Mammary epithelial cell (primary cell): ENCODE measurements at regions of chr5 and their contacts with region 1.

Region 1: DNA sequence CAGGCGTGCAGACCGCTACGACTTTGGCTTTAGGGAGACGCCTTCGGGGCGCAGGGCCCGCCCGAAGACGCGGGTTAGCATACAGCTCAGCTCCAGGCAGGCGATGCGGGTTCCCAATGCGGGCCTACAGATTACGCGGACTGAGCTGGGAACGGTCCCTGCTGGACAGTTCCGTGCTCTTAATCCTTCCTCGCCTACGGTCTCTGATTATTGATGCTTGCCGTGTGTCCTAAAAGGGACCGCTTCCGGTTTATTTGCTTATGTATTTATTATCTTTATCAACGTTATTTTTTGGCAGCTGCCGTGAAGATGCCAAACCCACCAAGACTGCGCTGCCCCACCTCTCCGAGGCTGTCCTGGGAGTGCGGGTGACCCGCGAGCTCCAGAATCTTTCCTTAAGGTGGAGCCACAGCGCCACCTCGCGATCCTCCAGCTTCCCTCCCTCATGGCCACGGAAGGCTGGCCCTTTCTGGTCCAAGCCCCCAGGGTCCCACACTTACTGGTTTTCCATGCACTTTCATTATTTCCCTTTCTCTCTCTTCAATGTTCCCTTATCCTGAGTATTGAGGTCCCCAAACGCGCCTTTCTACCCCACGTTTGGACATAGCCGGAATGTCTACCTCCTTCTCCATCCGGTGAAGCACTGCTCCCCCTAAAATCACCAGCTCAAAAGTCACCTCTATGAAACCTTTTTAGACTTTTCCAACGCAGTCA is 7.0 kb upstream of the EBF1 start:
- DNase-seq: peak; percentile 38
- H3K4me3 ChIP-seq: peak overlapping the region in 2 of 3 experiments; percentile 14 to 28
- H3K27ac ChIP-seq: no peak overlapping the region
- H3K4me1 ChIP-seq: peaks cover 4% of the 10 kb centered on the region
- H3K27me3 ChIP-seq: peaks cover 30% of the 10 kb centered on the region
- CTCF ChIP-seq: peak; percentile 88 to 90

Region 2: GRCh38 chr5:158695595-158696330 is 411.0 kb before region 1 on chr5:
- CTCF ChIA-PET with region 1: interaction called, 4 read pairs
- dilution Hi-C with region 1: no loop called
- in situ Hi-C with region 1: loop called (anchors 5 kb)
- intact Hi-C with region 1: loop called (anchors 1 kb)
- DNase-seq: peak; percentile 17
- H3K4me3 ChIP-seq: no peak overlapping the region
- H3K27ac ChIP-seq: no peak overlapping the region
- H3K4me1 ChIP-seq: no peaks in the 10 kb centered on the region
- H3K27me3 ChIP-seq: peaks cover 2% of the 10 kb centered on the region
- CTCF ChIP-seq: peak; percentile 90 to 97

Region 3: DNA sequence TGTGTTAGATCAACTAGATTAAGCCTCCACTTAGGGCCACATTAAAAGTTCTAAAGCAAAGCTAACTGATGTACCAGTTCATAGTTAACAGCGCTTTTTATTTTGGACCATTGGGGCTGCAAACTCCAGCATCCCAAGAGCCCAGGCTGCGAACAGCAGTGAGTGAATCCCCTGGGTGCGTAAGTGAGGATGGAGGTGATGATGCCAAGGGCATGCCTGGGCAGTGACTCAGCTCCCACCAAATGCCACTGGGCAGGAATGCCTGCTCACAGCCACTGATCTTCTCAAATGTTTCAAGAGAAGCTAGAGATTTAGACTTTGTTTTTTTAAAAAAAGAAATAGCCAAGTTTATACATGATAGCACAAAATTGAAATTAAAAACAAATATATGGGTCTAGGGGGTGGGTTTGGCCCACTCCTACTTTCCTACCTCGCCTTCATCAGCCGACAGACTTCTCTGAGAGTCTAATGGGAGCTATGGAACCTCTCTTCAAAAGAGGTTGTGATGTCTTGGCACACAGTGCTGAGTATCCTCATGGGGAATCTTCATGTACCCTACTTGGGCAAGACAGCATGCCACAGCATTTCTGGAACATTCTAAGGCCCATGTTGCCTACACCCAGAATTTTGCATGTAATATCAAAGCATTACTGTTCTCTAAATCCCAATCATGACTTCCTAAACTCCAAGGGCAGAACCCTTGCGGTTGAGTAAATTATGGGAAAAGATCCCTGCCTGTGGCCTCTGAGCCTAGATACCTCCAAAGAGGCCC is 405.1 kb before region 1 on chr5:
- CTCF ChIA-PET with region 1: interaction called, 10 read pairs
- dilution Hi-C with region 1: no loop called
- in situ Hi-C with region 1: loop called (anchors 5 kb)
- intact Hi-C with region 1: no loop called
- DNase-seq: peak; percentile 59
- H3K4me3 ChIP-seq: no peak overlapping the region
- H3K27ac ChIP-seq: no peak overlapping the region
- H3K4me1 ChIP-seq: peaks cover 15% of the 10 kb centered on the region
- H3K27me3 ChIP-seq: no peaks in the 10 kb centered on the region
- CTCF ChIP-seq: no peak

Region 4: GRCh38 chr5:158880483-158881001 is 226.2 kb before region 1 on chr5:
- CTCF ChIA-PET with region 1: no interaction called
- dilution Hi-C with region 1: no loop called
- in situ Hi-C with region 1: no loop called
- intact Hi-C with region 1: loop called (anchors 10 kb)
- DNase-seq: no peak
- H3K4me3 ChIP-seq: no peak overlapping the region
- H3K27ac ChIP-seq: no peak overlapping the region
- H3K4me1 ChIP-seq: no peaks in the 10 kb centered on the region
- H3K27me3 ChIP-seq: peaks cover 4% of the 10 kb centered on the region
- CTCF ChIP-seq: no peak

Region 5: DNA sequence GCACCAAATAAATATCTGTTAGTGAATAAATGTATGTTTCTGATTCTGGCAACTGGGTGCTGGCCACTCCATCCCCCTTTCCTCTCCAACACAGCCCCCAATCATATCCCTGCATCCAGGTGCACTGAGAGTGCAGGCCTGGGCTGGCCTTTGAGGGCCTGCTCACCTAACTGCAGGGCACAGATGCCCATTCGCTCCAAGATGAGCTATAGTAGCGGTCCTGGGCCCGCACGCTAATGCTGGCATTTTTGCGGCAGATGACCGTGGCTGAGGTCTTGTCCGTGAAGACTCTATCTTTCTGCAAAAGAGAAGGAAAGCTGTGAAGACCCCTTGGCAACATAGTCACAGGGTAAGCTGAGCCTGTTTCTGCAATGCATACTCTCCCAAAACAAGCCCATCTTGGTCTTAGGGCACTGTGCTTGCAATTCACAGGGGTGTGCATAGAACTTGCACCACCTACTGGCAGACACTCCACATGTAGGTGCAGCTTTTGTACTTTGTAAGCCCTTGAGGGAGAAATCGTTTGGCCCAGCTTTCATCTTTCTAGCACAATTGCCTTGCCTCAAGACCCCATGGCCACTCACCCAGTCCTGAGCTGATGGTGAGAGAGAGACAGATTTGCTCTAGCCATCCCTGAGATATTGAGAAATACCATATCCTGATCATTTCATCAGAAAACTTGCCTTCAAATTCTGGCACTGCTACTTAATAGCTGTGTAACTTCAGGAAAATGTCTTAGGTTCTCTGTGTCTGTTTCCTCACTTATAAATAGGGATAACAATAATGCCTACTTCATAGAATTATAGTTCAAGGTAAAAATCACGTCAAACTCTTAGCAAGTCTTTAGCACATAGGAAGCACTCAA is 210.0 kb after region 1 on chr5:
- CTCF ChIA-PET with region 1: no interaction called
- dilution Hi-C with region 1: no loop called
- in situ Hi-C with region 1: no loop called
- intact Hi-C with region 1: no loop called
- DNase-seq: peak; percentile 39
- H3K4me3 ChIP-seq: no peak overlapping the region
- H3K27ac ChIP-seq: no peak overlapping the region
- H3K4me1 ChIP-seq: no peaks in the 10 kb centered on the region
- H3K27me3 ChIP-seq: no peaks in the 10 kb centered on the region
- CTCF ChIP-seq: peak; percentile 90 to 91